ENCODE measurements at regions of chr7 and their contacts with region 1.

Region 1: GRCh38 chr7:77516085-77516484 is 21.0 kb upstream of the PTPN12 start:
- DNase-seq: no peak
- ATAC-seq: no peak
- H3K4me3 ChIP-seq: no peak overlapping the region
- H3K27ac ChIP-seq: no peak overlapping the region
- H3K4me1 ChIP-seq: no peaks in the 10 kb centered on the region
- H3K27me3 ChIP-seq: no peaks in the 10 kb centered on the region
- CTCF ChIP-seq: no peak

Region 2: DNA sequence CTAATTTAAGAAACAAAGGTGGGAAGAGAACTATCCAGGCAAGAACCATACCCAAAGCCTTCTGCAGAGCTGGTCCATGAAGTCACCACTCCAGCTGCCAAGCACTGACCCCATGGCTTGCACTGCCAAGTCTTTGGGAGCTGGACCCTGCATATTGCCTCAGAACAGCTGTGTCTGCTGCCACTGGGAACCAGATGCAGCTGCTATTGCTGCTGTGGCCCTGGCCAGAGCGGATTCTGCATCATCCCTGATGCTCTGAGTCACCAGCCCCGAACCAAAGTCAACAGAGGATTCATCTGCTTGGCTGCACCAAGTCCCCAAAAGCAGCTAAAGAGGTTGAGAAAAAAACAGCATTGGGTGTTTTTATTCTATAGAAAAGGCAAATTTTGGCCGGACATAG is 60.8 kb before region 1 on chr7:
- intact Hi-C with region 1: loop called in 1 of 10 experiments (anchors 10 kb)
- DNase-seq: peak; percentile 19 to 43
- ATAC-seq: peak in 7 of 8 donors; percentile 55 to 93 (median 75)
- H3K4me3 ChIP-seq: no peak overlapping the region
- H3K27ac ChIP-seq: peak overlapping the region in 2 of 10 donors; percentile 2 to 19
- H3K4me1 ChIP-seq: peaks cover 0 to 39% (median 9%) of the 10 kb centered on the region in 9 donors
- H3K27me3 ChIP-seq: no peaks in the 10 kb centered on the region
- CTCF ChIP-seq: no peak

Region 3: GRCh38 chr7:79124331-79124730 is 1608.2 kb after region 1 on chr7:
- intact Hi-C with region 1: no loop called
- DNase-seq: no peak
- ATAC-seq: no peak
- H3K4me3 ChIP-seq: no peak overlapping the region
- H3K27ac ChIP-seq: no peak overlapping the region
- H3K4me1 ChIP-seq: peaks cover 0 to 11% (median 0%) of the 10 kb centered on the region in 9 donors
- H3K27me3 ChIP-seq: no peaks in the 10 kb centered on the region
- CTCF ChIP-seq: no peak